Activated B cell treated with CpG ODN at 0.5 μM for 24 hours (primary cell): ENCODE measurements at regions of chr12 and their contacts with region 1.

Region 1: GRCh38 chr12:116975779-116976393 is 65.1 kb downstream of the FBXW8 start:
- DNase-seq: no peak
- ATAC-seq: no peak
- H3K4me3 Mint-ChIP-seq: no peak overlapping the region
- H3K27ac Mint-ChIP-seq: no peak overlapping the region
- H3K4me1 Mint-ChIP-seq: peaks cover 38% of the 10 kb centered on the region
- H3K27me3 Mint-ChIP-seq: no peaks in the 10 kb centered on the region
- CTCF ChIP-seq: no peak

Region 2: GRCh38 chr12:116959845-116960514 is 15.9 kb before region 1 on chr12:
- CTCF ChIA-PET with region 1: no interaction called
- POLR2A ChIA-PET with region 1: interaction called, 12 read pairs
- intact Hi-C with region 1: no loop called
- DNase-seq: no peak
- ATAC-seq: peak; percentile 70
- H3K4me3 Mint-ChIP-seq: no peak overlapping the region
- H3K27ac Mint-ChIP-seq: no peak overlapping the region
- H3K4me1 Mint-ChIP-seq: peaks cover 27% of the 10 kb centered on the region
- H3K27me3 Mint-ChIP-seq: no peaks in the 10 kb centered on the region
- CTCF ChIP-seq: no peak

Region 3: GRCh38 chr12:118790578-118790977 is 1814.7 kb after region 1 on chr12:
- CTCF ChIA-PET with region 1: no interaction called
- POLR2A ChIA-PET with region 1: no interaction called
- intact Hi-C with region 1: no loop called
- DNase-seq: no peak
- ATAC-seq: no peak
- H3K4me3 Mint-ChIP-seq: no peak overlapping the region
- H3K27ac Mint-ChIP-seq: no peak overlapping the region
- H3K4me1 Mint-ChIP-seq: no peaks in the 10 kb centered on the region
- H3K27me3 Mint-ChIP-seq: no peaks in the 10 kb centered on the region
- CTCF ChIP-seq: no peak